B cell (primary cell): ENCODE measurements at regions of chr17 and their contacts with region 1.

Region 1: GRCh38 chr17:63406689-63407330 is 39.3 kb downstream of the CYB561 start:
- DNase-seq: peak; percentile 86
- ATAC-seq: peak; percentile 81
- H3K4me3 ChIP-seq: no peak overlapping the region
- H3K4me3 Mint-ChIP-seq: no peak overlapping the region
- H3K27ac ChIP-seq: no peak overlapping the region
- H3K27ac Mint-ChIP-seq: no peak overlapping the region
- H3K4me1 ChIP-seq: no peaks in the 10 kb centered on the region
- H3K4me1 Mint-ChIP-seq: peaks cover 2% of the 10 kb centered on the region
- H3K27me3 ChIP-seq: no peaks in the 10 kb centered on the region
- H3K27me3 Mint-ChIP-seq: no peaks in the 10 kb centered on the region
- CTCF ChIP-seq: peak; percentile 91

Region 2: GRCh38 chr17:62703775-62704378 is 702.9 kb before region 1 on chr17:
- CTCF ChIA-PET with region 1: interaction called, 18 read pairs
- POLR2A ChIA-PET with region 1: no interaction called
- intact Hi-C with region 1: loop called (anchors 1 kb)
- DNase-seq: peak; percentile 81
- ATAC-seq: peak; percentile 94
- H3K4me3 ChIP-seq: peak overlapping the region in 4 of 5 experiments; percentile 39 to 58 (median 54)
- H3K4me3 Mint-ChIP-seq: peak overlapping the region; percentile 63
- H3K27ac ChIP-seq: no peak overlapping the region
- H3K27ac Mint-ChIP-seq: no peak overlapping the region
- H3K4me1 ChIP-seq: peaks cover 6 to 11% of the 10 kb centered on the region in 2 donors
- H3K4me1 Mint-ChIP-seq: peaks cover 12% of the 10 kb centered on the region
- H3K27me3 ChIP-seq: peaks cover 0 to 4% (median 2%) of the 10 kb centered on the region in 4 experiments
- H3K27me3 Mint-ChIP-seq: peaks cover 25% of the 10 kb centered on the region
- CTCF ChIP-seq: peak; percentile 83

Region 3: DNA sequence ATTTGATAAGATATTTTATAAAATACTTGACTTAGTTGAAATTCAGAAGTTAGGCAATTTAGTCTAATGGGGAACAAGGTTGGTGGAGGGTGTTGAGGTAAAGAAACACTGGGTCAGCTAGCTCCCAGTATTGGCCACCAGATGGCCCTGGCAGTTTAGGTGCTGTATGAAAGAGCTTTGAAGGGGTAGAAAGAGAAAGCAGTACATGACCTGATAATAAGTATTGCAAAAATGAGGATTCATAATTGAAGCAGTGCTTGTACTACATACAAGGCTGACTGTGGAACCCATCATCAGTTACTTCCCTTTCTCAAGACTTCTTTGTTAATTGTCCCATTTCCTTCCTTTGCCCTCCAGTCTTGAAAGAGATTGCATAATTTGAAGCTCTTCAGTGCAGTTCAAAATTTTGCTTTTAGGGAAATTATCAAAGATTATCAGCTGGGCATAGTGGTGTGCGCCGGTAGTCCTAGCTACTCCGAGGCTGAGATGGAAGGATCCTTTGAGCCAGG is 411.4 kb before region 1 on chr17:
- CTCF ChIA-PET with region 1: interaction called, 32 read pairs
- POLR2A ChIA-PET with region 1: no interaction called
- intact Hi-C with region 1: loop called (anchors 1 kb)
- DNase-seq: peak; percentile 10
- ATAC-seq: no peak
- H3K4me3 ChIP-seq: no peak overlapping the region
- H3K4me3 Mint-ChIP-seq: no peak overlapping the region
- H3K27ac ChIP-seq: no peak overlapping the region
- H3K27ac Mint-ChIP-seq: no peak overlapping the region
- H3K4me1 ChIP-seq: peaks cover 0 to 3% of the 10 kb centered on the region in 2 donors
- H3K4me1 Mint-ChIP-seq: peaks cover 9% of the 10 kb centered on the region
- H3K27me3 ChIP-seq: no peaks in the 10 kb centered on the region
- H3K27me3 Mint-ChIP-seq: peaks cover 4% of the 10 kb centered on the region
- CTCF ChIP-seq: peak; percentile 32

Region 4: DNA sequence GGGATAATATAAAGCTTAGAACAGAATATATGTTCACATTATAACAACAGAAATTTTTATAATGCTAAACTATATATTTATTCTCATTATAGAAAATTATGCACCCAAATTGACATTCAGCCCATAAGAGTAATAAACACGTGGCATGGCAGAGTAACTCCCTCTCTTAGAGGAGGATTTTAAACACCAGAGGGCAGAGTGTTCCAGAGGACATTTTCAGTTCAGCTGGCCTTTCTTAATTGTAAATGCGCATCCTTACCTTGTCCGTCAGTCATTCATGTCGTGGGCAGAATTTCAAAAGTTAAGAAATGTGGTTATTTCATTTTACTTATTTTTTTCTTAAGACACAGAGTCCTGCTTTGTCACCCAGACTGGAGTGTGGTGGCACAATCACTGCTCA is 293.6 kb before region 1 on chr17:
- CTCF ChIA-PET with region 1: interaction called, 31 read pairs
- POLR2A ChIA-PET with region 1: no interaction called
- intact Hi-C with region 1: loop called (anchors 1 kb)
- DNase-seq: peak; percentile 38
- ATAC-seq: no peak
- H3K4me3 ChIP-seq: no peak overlapping the region
- H3K4me3 Mint-ChIP-seq: no peak overlapping the region
- H3K27ac ChIP-seq: no peak overlapping the region
- H3K27ac Mint-ChIP-seq: no peak overlapping the region
- H3K4me1 ChIP-seq: no peaks in the 10 kb centered on the region
- H3K4me1 Mint-ChIP-seq: no peaks in the 10 kb centered on the region
- H3K27me3 ChIP-seq: no peaks in the 10 kb centered on the region
- H3K27me3 Mint-ChIP-seq: peaks cover 6% of the 10 kb centered on the region
- CTCF ChIP-seq: no peak

Region 5: DNA sequence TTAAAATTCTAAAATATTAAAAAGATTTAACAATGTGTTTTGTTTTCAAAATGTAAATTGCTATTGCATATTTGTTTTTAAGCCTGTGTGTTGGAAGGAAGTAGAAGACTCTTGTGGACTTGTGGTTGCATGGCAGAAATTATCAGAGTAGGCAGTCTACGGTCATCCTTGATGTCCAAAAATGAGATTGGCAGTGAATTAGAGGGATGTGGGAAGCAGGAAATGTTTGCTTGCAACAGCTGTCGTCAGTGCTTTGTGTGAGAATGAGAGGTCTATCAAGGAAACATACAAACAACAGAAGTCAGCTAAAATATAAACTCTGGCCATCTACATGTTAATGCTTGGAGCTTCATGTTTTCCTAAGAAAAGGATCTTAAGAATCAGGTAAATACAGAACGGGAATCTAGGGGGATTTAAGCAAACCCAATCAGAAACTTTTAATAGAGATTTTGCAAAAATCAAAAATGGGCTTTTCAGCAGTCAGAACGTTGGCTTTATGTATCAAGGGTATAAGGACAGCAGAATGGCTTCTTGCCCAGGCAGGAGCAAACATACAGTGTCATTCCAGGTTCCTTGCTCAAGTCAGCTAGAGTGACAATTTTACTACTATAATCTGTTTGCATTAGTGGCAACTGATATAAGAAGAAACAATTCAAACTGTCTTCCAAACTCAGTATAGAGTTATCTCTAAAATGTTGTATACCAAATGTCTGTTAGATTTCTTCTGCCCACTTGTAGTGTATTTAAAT is 157.4 kb before region 1 on chr17:
- CTCF ChIA-PET with region 1: no interaction called
- POLR2A ChIA-PET with region 1: no interaction called
- intact Hi-C with region 1: no loop called
- DNase-seq: no peak
- ATAC-seq: no peak
- H3K4me3 ChIP-seq: no peak overlapping the region
- H3K4me3 Mint-ChIP-seq: no peak overlapping the region
- H3K27ac ChIP-seq: no peak overlapping the region
- H3K27ac Mint-ChIP-seq: no peak overlapping the region
- H3K4me1 ChIP-seq: no peaks in the 10 kb centered on the region
- H3K4me1 Mint-ChIP-seq: no peaks in the 10 kb centered on the region
- H3K27me3 ChIP-seq: no peaks in the 10 kb centered on the region
- H3K27me3 Mint-ChIP-seq: no peaks in the 10 kb centered on the region
- CTCF ChIP-seq: no peak

Region 6: DNA sequence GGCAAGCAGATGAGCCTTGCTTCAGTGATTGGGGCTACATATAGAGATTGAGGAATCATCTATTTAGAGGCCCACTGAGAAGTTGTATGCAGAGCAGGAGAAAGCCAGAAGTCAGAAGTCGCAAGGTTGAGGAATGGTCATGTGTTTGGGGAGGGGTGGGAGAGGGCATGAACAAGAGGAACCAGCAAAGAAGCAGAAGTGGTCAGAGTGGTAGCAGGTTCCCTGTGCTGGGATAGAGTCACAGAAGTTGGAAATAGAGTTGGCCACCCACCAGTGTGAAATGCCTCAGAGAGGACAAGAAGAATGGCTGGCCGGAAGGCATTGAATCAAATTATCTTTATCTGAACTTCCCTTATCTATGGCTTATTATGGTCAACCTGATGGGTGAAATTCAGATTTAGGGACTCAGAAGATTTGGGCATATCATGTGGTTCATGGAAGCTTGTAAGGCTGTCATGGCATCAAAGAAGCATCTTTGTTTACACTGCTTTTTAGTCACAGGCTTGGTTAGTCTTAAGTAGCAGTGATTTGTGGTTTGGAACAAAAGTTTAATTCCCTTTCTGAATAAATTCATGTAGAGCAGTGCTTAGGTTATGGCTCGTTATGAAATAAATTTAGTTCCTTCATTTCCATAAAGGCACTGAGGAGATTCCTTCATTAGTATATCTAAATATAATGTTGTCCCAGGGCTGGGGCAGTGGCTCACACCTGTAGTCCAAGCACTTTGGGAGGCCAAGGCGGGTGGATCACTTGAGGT is 235.1 kb after region 1 on chr17:
- CTCF ChIA-PET with region 1: no interaction called
- POLR2A ChIA-PET with region 1: no interaction called
- intact Hi-C with region 1: no loop called
- DNase-seq: no peak
- ATAC-seq: no peak
- H3K4me3 ChIP-seq: no peak overlapping the region
- H3K4me3 Mint-ChIP-seq: no peak overlapping the region
- H3K27ac ChIP-seq: no peak overlapping the region
- H3K27ac Mint-ChIP-seq: peak overlapping the region; percentile 5
- H3K4me1 ChIP-seq: peaks cover 26 to 34% of the 10 kb centered on the region in 2 donors
- H3K4me1 Mint-ChIP-seq: peaks cover 38% of the 10 kb centered on the region
- H3K27me3 ChIP-seq: no peaks in the 10 kb centered on the region
- H3K27me3 Mint-ChIP-seq: no peaks in the 10 kb centered on the region
- CTCF ChIP-seq: no peak